Activated CD4-positive, alpha-beta T cell treated with anti-CD3 and anti-CD28 coated beads for 36 hours (primary cell): ENCODE measurements at regions of chr15 and their contacts with region 1.

Region 1: DNA sequence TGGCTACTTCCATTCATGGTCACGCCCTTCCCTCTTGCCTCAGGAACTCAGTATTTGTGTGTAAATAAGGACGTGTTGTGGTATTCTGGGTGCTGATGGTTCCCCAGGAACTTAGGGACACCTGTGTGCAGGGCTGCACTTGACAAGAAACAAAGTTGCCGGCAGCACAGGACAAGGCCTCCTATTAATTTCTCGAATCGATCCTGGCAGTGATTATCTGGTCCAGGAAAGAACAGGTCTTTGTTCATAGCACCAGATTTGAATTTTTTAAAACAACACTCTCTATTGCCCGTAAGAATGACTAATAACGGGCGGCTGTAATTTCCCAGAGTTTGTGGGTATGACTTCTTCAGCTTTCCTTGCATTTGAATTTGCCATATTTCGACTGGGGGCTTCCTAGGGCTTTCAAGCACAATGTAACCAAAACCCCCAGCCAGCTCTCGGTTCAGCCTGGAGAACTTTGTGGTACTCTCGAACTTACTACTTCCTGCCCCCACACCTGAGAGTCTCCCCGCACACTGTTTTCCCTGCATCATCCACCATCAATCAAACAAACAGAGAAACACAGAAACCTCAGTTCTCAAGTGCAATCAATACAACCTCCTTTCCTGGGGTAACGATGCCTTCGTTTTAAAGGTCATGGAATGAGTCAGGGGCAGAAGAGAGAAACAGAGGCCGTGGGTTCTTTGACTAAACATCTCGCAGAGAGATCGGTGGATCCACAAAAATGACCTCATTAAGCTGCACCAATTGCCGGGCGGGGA is 241.7 kb upstream of the ICE2 start:
- DNase-seq: peak; percentile 84
- ATAC-seq: peak; percentile 86
- H3K4me3 Mint-ChIP-seq: peak overlapping the region; percentile 43
- H3K27ac Mint-ChIP-seq: peak overlapping the region; percentile 95
- H3K4me1 Mint-ChIP-seq: peaks cover 61% of the 10 kb centered on the region
- H3K27me3 Mint-ChIP-seq: no peaks in the 10 kb centered on the region

Region 2: DNA sequence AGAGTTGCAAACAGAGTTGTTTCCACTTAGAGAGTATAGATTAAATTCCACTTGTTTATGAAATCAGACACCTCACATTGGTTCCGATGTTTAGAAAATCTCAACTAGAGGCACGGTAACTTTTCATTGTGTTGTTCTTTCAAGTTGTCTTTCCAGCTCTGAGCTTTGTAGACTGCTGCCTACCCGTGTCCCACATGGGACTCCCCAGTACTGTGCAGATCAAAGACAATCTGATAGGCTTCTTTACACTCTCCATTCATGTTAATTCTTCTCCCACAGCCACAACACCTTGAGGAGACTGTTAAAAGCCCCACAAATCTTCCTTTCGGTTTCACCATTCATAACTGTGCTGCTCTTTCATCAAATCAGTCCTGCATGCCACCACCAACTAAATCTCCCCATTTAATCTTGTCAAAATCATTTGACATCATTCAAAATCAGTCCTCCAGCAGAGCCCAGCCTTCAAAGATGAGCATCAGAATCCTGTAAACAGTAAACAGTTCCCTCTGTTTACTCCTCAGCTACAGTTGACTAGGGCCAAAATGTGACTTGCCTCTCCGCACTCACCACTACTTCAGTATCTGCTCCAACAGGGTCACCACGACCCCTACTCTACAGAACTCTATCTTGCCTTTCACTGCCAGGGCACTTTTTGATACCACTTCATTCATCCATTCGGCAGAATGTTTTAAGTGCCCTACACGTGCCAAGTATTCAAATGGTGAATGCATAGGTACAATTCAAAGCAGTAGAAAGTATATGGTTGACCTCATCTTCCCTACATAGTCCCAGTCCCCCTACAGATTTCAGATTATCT is 331.2 kb before region 1 on chr15:
- CTCF ChIA-PET with region 1: no interaction called
- POLR2A ChIA-PET with region 1: no interaction called
- intact Hi-C with region 1: loop called in 1 of 2 experiments (anchors 2 kb)
- DNase-seq: peak; percentile 59
- ATAC-seq: peak; percentile 87
- H3K4me3 Mint-ChIP-seq: peak overlapping the region; percentile 2
- H3K27ac Mint-ChIP-seq: peak overlapping the region; percentile 10
- H3K4me1 Mint-ChIP-seq: peaks cover 56% of the 10 kb centered on the region
- H3K27me3 Mint-ChIP-seq: no peaks in the 10 kb centered on the region

Region 3: DNA sequence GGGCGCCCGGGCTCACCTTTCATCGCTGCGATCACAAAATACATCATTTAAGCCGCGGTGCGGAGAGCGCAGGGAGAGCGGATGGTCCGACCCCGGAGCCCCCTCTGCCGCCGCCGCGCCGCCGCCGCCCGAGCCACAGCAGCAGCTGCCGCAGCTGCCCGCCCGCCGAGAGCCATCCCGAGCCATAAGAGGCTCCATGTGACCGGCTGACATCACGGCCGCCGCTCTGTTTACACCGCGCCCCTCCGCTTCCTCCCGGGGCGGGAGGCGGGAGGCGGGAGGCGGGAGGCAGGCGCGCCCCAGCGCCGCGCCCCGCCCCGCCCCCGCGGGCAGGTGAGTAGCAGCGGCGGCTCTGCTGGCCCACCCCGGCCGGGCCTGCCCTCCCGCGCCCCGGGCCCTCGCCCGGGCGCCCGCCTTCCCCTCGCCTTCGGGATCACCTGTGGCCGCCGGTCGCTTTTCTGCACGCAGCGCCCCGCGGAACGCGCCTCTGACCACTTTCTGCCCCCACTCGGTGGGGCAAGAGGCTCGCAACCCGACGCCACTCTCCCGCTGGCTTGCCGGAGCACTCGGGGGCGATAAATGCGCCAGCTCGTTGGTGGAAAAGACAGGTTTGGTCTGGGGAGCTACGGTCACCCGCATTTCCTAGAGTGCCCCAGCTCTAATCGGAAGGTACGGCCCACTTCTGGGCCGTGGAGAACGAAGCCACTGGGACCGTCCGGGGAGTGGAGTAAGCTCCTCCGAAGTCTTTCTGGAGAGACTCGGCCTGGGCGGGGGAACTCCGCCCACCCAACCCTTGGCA is 128.1 kb before region 1 on chr15:
- CTCF ChIA-PET with region 1: interaction called, 5 read pairs
- POLR2A ChIA-PET with region 1: no interaction called
- intact Hi-C with region 1: loop called (anchors 2 kb)
- DNase-seq: peak; percentile 91
- ATAC-seq: peak; percentile 85
- H3K4me3 Mint-ChIP-seq: peak overlapping the region; percentile 76
- H3K27ac Mint-ChIP-seq: peak overlapping the region; percentile 51
- H3K4me1 Mint-ChIP-seq: peaks cover 47% of the 10 kb centered on the region
- H3K27me3 Mint-ChIP-seq: no peaks in the 10 kb centered on the region

Region 4: DNA sequence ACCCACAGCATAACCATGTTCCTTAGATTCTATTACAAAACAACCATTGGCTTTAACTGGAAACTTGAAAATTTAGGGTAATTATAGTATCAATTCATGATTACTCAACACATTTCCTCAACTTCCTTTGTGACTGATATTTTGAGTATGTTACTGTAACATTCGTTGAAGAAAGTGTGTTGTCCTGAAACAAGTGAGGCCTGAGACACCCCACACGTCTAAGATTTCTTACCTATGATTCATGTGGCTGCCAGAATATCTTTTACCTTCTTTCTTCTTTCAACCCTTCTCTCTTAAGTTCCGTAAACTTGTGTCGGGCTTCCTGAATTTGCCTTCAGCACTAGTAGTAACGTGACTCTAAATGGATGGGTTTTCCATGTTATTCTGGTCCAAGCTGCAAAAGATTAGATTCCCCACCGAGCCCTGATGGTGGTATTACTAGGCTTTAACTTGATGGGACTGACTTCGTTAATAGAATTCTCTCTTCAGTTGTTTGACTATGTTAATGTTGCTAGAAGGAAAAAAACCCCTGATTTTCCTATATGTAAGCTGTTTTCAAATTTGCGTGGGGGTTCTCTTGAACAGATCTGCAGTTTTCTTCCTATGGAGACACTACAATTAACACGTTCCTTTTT is 54.3 kb after region 1 on chr15:
- CTCF ChIA-PET with region 1: no interaction called
- POLR2A ChIA-PET with region 1: no interaction called
- intact Hi-C with region 1: loop called (anchors 1 to 2 kb)
- DNase-seq: peak; percentile 46
- ATAC-seq: peak; percentile 86
- H3K4me3 Mint-ChIP-seq: no peak overlapping the region
- H3K27ac Mint-ChIP-seq: peak overlapping the region; percentile 53
- H3K4me1 Mint-ChIP-seq: peaks cover 69% of the 10 kb centered on the region
- H3K27me3 Mint-ChIP-seq: no peaks in the 10 kb centered on the region

Region 5: GRCh38 chr15:60804986-60805949 is 84.6 kb after region 1 on chr15:
- CTCF ChIA-PET with region 1: interaction called, 3 read pairs
- POLR2A ChIA-PET with region 1: interaction called, 10 read pairs
- intact Hi-C with region 1: loop called in 1 of 2 experiments (anchors 1 kb)
- DNase-seq: no peak
- ATAC-seq: no peak
- H3K4me3 Mint-ChIP-seq: no peak overlapping the region
- H3K27ac Mint-ChIP-seq: no peak overlapping the region
- H3K4me1 Mint-ChIP-seq: peaks cover 75% of the 10 kb centered on the region
- H3K27me3 Mint-ChIP-seq: no peaks in the 10 kb centered on the region

Region 6: DNA sequence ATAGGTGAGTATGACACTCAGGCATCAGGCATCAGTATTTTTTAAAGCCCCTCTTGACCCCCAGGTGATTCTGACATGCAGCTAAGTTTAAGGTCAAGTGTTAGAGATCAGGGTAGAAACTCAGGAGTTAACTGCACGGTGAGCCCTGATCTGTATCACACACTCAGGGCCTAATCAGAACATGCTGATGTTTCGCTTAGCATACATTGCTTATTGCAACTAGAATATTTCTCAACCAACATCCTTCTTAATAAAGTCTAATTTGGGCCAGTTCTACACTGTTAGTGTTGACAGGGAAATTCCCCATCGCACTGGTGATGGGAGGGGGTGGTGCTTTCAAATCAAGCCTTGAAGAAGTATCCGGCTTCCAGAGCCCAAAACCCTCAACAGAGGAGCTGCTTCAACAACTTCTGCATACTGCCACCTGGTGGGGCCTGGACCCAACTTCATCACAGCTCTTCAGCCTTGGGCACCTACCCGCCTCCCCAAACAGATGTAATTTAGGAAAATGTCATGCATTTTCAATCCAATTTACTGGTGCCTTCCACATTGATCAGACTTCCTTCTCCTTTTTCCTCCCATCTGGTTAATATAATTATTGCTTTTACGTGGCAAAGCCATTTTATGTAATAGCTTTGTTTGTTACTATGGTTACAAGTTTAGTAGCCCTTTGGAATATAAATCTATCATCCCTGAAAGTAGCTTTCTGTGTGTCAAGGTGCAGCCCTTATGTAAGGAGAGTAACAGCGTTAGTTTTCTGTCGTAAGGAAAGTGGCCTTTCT is 196.2 kb after region 1 on chr15:
- CTCF ChIA-PET with region 1: interaction called, 10 read pairs
- POLR2A ChIA-PET with region 1: no interaction called
- intact Hi-C with region 1: loop called in 1 of 2 experiments (anchors 5 kb)
- DNase-seq: peak; percentile 94
- ATAC-seq: peak; percentile 94
- H3K4me3 Mint-ChIP-seq: no peak overlapping the region
- H3K27ac Mint-ChIP-seq: peak overlapping the region; percentile 51
- H3K4me1 Mint-ChIP-seq: peaks cover 27% of the 10 kb centered on the region
- H3K27me3 Mint-ChIP-seq: no peaks in the 10 kb centered on the region